ENCODE measurements at regions of chr1 and their contacts with region 1.

Region 1: DNA sequence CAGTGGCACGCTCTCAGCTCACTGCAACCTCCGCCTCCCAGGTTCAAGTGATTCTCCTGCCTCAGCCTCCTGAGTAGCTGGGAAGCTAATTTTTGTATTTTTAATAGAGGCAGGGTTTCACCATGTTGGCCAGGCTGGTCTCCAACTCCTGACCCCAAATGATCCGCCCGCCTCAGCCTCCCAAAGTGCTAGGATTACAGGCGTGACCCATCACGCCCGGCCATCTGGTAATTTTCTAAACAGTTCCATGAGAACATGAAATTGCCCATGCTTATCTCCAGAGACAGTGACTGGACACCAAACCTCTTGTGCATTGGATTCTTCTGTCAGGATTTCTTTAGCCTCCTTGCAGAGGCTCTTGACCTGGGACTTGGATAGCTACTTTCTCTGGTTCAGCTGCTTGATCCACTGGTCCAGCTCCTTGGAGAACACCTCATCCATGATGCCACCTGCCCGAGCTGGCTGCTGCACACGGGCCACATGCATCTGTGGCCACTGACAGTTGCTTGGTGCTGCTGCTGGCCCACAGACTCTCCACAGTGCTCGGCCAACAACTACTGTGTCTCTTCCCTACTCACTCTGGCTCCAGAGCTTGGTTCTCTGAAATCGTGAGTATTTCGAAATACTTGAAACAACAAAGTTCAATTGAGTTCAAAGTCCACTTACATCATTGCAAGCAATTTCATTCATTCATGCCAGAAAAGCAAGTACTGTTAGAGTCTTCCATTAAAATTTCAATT is 40.0 kb upstream of the CTPS1 start:
- DNase-seq: peak; percentile 42 to 45 (median 43)
- H3K4me3 ChIP-seq: peak overlapping the region in 1 of 3 experiments; percentile 10
- H3K4me3 Mint-ChIP-seq: peak overlapping the region; percentile 20 to 80
- H3K27ac ChIP-seq: no peak overlapping the region
- H3K27ac Mint-ChIP-seq: peak overlapping the region in 6 of 7 donors; percentile 11 to 86 (median 63)
- H3K4me1 ChIP-seq: peaks cover 39 to 51% of the 10 kb centered on the region in 2 donors
- H3K4me1 Mint-ChIP-seq: peaks cover 37% of the 10 kb centered on the region
- H3K27me3 ChIP-seq: no peaks in the 10 kb centered on the region
- H3K27me3 Mint-ChIP-seq: peaks cover 0 to 3% (median 0%) of the 10 kb centered on the region in 3 donors
- CTCF ChIP-seq: no peak

Region 2: GRCh38 chr1:40862008-40862863 is 77.3 kb before region 1 on chr1 and contains the start of gene CITED4:
- intact Hi-C with region 1: loop called in 1 of 2 experiments (anchors 5 kb)
- DNase-seq: peak; percentile 92 to 93 (median 93)
- H3K4me3 ChIP-seq: peak within 1 kb of the TSS; percentile 50 to 82 (median 58)
- H3K4me3 Mint-ChIP-seq: peak within 1 kb of the TSS; percentile 93 to 97
- H3K27ac ChIP-seq: peak within 1 kb of the TSS; percentile 69 to 83
- H3K27ac Mint-ChIP-seq: peak within 1 kb of the TSS; percentile 89 to 96 (median 94)
- H3K4me1 ChIP-seq: peaks cover 22 to 42% of the 10 kb centered on the region in 2 donors
- H3K4me1 Mint-ChIP-seq: peaks cover 30% of the 10 kb centered on the region
- H3K27me3 ChIP-seq: no peaks in the 10 kb centered on the region
- H3K27me3 Mint-ChIP-seq: peaks cover 4 to 10% (median 5%) of the 10 kb centered on the region in 3 donors
- CTCF ChIP-seq: no peak
- polyA plus RNA-seq, gene CITED4: 2.4 to 18.8 (median 17.1) TPM

Region 3: DNA sequence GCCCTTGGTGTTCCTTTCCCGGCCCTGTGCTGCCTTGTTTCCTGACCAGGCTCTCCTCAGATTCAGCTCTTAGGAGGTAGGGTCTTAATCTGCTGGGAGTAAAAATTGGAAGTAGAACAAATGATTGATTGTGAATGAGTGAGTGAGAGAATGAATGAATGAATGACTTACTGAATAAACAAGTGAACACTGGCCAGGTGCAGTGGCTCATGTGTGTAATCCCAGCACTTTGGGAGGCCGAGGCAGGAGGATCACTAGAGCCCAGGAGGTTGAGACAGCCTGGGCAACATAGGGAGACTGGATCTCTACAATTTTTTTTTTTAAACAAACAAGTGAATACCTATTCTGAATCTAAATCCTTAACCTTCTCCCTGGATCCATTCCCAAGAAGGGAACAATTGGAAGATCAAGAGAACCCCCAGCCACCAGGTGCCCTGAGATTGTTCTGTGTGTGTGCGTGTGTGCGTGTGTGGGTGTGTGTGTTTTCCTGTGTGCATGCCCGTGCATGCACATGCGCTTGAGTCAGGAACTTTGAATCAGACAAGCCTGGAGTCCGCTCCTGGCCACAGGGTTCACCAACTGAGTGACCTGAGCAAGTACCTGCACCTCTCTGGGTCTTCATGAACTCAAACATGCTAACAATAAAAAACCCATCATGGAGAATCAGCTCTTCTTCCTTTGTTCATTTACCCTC is 53.0 kb before region 1 on chr1:
- intact Hi-C with region 1: loop called in 1 of 2 experiments (anchors 5 kb)
- DNase-seq: no peak
- H3K4me3 ChIP-seq: no peak overlapping the region
- H3K4me3 Mint-ChIP-seq: peak overlapping the region in 1 of 2 donors; percentile 30
- H3K27ac ChIP-seq: no peak overlapping the region
- H3K27ac Mint-ChIP-seq: no peak overlapping the region
- H3K4me1 ChIP-seq: peaks cover 14 to 23% of the 10 kb centered on the region in 2 donors
- H3K4me1 Mint-ChIP-seq: peaks cover 26% of the 10 kb centered on the region
- H3K27me3 ChIP-seq: peaks cover 17 to 35% of the 10 kb centered on the region in 2 donors
- H3K27me3 Mint-ChIP-seq: peaks cover 39 to 47% (median 39%) of the 10 kb centered on the region in 3 donors
- CTCF ChIP-seq: no peak

Region 4: GRCh38 chr1:41274752-41275545 is 335.5 kb after region 1 on chr1:
- intact Hi-C with region 1: no loop called
- DNase-seq: peak; percentile 80 to 94 (median 86)
- H3K4me3 ChIP-seq: peak overlapping the region in 1 of 3 experiments; percentile 51
- H3K4me3 Mint-ChIP-seq: peak overlapping the region; percentile 1 to 80
- H3K27ac ChIP-seq: peak overlapping the region; percentile 80 to 82
- H3K27ac Mint-ChIP-seq: peak overlapping the region; percentile 84 to 97 (median 90)
- H3K4me1 ChIP-seq: peaks cover 56 to 58% of the 10 kb centered on the region in 2 donors
- H3K4me1 Mint-ChIP-seq: peaks cover 56% of the 10 kb centered on the region
- H3K27me3 ChIP-seq: no peaks in the 10 kb centered on the region
- H3K27me3 Mint-ChIP-seq: peaks cover 0 to 3% (median 1%) of the 10 kb centered on the region in 3 donors
- CTCF ChIP-seq: no peak

Measured in CD14-positive monocyte (primary cell).